Right lobe of liver (tissue), 6 donors: ENCODE measurements at regions of chr12 and their contacts with region 1.

Region 1: GRCh38 chr12:3135522-3136461 is 58.6 kb downstream of the TSPAN9 start:
- DNase-seq: no peak
- ATAC-seq: peak; percentile 71 to 78 (median 74)
- H3K4me3 ChIP-seq: no peak overlapping the region
- H3K27ac ChIP-seq: no peak overlapping the region
- H3K4me1 ChIP-seq: peaks cover 0 to 29% (median 6%) of the 10 kb centered on the region in 4 donors
- H3K27me3 ChIP-seq: no peaks in the 10 kb centered on the region
- CTCF ChIP-seq: peak; percentile 67 to 80 (median 74)
- POLR2A ChIP-seq: no peak

Region 2: DNA sequence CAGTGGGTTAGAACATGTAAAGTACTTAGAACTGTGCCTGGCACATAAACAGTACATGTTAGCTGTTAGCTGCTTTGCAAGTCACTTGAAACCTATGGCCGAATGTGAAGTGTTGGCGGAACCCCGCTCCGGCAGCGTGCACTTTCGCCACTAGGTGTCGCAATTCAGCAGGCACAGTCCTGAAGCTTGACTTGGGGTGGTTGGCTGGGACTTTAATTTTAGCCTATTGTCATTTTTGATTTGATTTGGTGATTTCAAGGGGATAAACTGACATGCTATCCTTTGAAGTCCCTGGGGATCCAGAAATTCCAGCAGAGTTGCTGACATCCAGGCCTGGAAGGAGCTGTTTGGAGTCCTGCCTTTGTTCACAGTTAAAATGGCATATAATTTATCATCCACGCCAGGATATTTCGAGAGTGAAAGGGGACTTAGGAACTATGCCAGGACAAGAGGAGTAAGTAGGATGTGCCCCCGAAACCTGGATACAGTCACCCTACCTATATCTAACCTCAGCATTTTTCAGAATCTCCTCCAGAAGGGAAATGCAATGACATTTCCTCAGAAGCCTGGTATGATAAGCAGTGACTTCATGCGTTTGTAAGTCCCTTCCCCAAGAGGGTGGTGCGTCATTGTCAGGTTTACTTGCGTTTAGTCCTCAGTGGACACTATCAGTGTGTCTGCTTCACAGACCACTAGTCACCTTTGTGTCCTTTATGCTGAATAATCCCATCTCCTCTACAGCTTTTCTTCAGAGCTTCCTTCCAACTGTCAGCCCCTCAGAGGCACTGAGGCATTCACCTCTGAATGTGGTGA is 62.1 kb before region 1 on chr12:
- intact Hi-C with region 1: loop called in 1 of 2 experiments (anchors 10 kb)
- DNase-seq: peak; percentile 82 to 87 (median 82)
- ATAC-seq: peak; percentile 50 to 59 (median 52)
- H3K4me3 ChIP-seq: no peak overlapping the region
- H3K27ac ChIP-seq: no peak overlapping the region
- H3K4me1 ChIP-seq: peaks cover 0 to 6% (median 2%) of the 10 kb centered on the region in 4 donors
- H3K27me3 ChIP-seq: no peaks in the 10 kb centered on the region
- CTCF ChIP-seq: peak; percentile 92 to 99 (median 98)
- POLR2A ChIP-seq: no peak

Region 3: GRCh38 chr12:3281588-3282383 is 146.0 kb after region 1 on chr12:
- intact Hi-C with region 1: loop called (anchors 5 kb)
- DNase-seq: no peak
- ATAC-seq: no peak
- H3K4me3 ChIP-seq: no peak overlapping the region
- H3K27ac ChIP-seq: no peak overlapping the region
- H3K4me1 ChIP-seq: no peaks in the 10 kb centered on the region
- H3K27me3 ChIP-seq: no peaks in the 10 kb centered on the region
- CTCF ChIP-seq: no peak
- POLR2A ChIP-seq: no peak